ENCODE measurements at regions of chr4 and their contacts with region 1.

Region 1: GRCh38 chr4:52983563-52984303 is 121.6 kb downstream of the RASL11B start:
- DNase-seq: peak; percentile 56 to 69 (median 64)
- H3K4me3 ChIP-seq: peak overlapping the region in 1 of 7 experiments; percentile 23
- H3K27ac ChIP-seq: no peak overlapping the region
- H3K4me1 ChIP-seq: peaks cover 4 to 11% (median 6%) of the 10 kb centered on the region in 4 experiments
- H3K27me3 ChIP-seq: no peaks in the 10 kb centered on the region

Region 2: DNA sequence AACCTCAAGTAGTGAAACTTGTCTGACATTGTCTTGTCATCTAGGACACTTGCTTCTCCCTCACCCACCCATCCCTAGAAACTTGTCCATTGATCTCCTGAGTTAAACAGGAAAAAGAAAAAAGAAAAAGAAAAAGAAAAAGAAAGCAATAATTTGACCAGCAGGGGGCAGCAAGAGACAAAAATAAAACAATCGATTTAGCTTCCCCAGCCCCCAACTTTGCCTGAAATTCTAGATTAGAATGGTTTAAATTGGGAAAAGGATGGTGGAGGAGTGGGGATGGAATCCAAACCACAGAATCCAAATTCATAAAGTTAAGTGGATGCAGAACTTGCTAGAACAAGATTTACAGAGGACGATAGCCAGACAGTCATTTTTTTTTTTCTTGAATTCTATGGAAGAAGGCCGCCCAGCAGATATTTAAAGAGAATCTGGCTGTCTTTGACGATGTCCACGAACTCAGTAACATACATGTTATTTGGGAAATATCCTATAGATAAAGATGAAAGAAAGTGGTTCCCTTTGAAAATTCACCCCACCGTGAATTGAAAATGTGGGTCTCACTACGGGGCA is 607.5 kb before region 1 on chr4:
- CTCF ChIA-PET with region 1: interaction called, 53 read pairs
- POLR2A ChIA-PET with region 1: no interaction called
- DNase-seq: peak; percentile 31 to 55 (median 33)
- H3K4me3 ChIP-seq: no peak overlapping the region
- H3K27ac ChIP-seq: no peak overlapping the region
- H3K4me1 ChIP-seq: no peaks in the 10 kb centered on the region
- H3K27me3 ChIP-seq: no peaks in the 10 kb centered on the region

Region 3: DNA sequence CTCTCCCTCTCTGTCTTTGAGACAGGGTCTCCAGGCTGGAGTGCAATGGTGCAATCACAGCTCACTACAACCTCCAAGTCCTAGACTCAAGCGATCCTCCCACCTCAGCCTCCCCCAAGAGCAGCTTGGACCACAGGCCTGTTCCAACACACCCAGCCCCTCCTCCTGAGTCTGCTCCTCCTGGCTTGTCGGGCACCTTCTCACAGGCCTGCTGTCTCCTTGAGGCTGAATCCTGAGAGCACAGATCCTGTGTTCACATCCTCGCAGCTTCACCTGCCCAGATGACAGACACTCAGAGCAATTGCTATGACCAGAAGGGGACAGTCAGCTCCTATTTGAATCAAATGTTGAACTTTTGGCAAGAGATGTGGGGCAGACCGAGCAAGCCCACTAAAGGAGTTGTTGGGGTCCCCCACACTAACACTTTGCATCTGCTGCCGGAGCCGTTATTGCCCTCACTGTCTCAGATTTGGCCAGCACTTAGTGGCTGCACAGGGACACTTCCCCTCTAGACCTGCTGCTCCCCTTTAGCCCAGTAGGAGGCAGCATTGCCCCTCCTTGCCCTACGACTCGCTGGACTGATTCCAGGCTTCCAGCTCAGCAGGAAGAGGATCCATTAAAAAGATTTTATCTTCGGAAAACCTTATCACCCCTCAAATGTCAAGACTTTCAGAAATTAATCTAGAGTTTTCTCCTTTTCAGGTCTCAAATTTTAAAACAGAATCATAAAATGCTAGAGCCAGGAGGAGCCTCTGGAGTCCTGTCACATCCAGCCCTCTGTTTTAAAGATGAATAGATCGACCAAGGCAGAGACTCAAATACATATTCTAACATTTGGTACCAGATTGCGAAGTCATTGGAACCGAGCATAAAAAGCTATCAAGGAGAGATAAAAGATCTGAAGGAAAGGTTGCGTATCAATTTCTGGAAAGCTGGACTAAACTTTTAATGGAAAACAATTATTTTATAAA is 438.3 kb before region 1 on chr4:
- CTCF ChIA-PET with region 1: interaction called, 54 read pairs
- POLR2A ChIA-PET with region 1: no interaction called
- DNase-seq: peak; percentile 36 to 65 (median 51)
- H3K4me3 ChIP-seq: no peak overlapping the region
- H3K27ac ChIP-seq: no peak overlapping the region
- H3K4me1 ChIP-seq: peaks cover 0 to 3% (median 0%) of the 10 kb centered on the region in 4 experiments
- H3K27me3 ChIP-seq: no peaks in the 10 kb centered on the region

Region 4: GRCh38 chr4:52968691-52969090 is 15.0 kb before region 1 on chr4:
- CTCF ChIA-PET with region 1: no interaction called
- POLR2A ChIA-PET with region 1: no interaction called
- DNase-seq: no peak
- H3K4me3 ChIP-seq: no peak overlapping the region
- H3K27ac ChIP-seq: no peak overlapping the region
- H3K4me1 ChIP-seq: no peaks in the 10 kb centered on the region
- H3K27me3 ChIP-seq: no peaks in the 10 kb centered on the region

Region 5: DNA sequence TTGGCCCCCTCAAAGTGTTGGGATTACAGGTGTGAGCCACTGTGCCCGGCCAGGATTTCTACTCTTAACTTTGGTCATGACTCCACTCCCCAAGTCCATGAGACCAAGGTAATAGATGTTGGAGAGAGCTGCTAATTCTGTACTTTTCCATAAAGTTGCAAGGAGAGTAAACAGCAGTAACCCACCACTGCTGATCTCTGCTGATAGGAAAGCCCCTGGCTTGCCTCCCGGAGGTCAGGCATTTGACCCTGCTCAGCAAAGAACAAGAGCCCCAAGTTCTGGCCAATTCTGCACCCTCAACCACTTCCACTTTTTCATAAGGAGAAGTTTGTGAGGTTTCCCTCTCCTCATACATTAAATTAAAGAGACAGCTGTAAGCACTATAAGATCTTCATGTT is 21.4 kb after region 1 on chr4:
- CTCF ChIA-PET with region 1: interaction called, 10 read pairs
- POLR2A ChIA-PET with region 1: no interaction called
- DNase-seq: peak in 2 of 3 donors; percentile 40 to 59
- H3K4me3 ChIP-seq: peak overlapping the region in 2 of 7 experiments; percentile 17 to 44
- H3K27ac ChIP-seq: no peak overlapping the region
- H3K4me1 ChIP-seq: peaks cover 0 to 53% (median 34%) of the 10 kb centered on the region in 4 experiments
- H3K27me3 ChIP-seq: no peaks in the 10 kb centered on the region

Region 6: GRCh38 chr4:53022513-53023100 is 38.9 kb after region 1 on chr4:
- CTCF ChIA-PET with region 1: no interaction called
- POLR2A ChIA-PET with region 1: no interaction called
- DNase-seq: no peak
- H3K4me3 ChIP-seq: no peak overlapping the region
- H3K27ac ChIP-seq: no peak overlapping the region
- H3K4me1 ChIP-seq: no peaks in the 10 kb centered on the region
- H3K27me3 ChIP-seq: no peaks in the 10 kb centered on the region